Left ventricle myocardium inferior (tissue), 1 donor: ENCODE measurements at regions of chr2 and their contacts with region 1.

Region 1: GRCh38 chr2:214995926-214996670 is 142.3 kb downstream of the ABCA12 start:
- DNase-seq: no peak
- H3K4me3 ChIP-seq: no peak overlapping the region
- H3K27ac ChIP-seq: no peak overlapping the region
- H3K4me1 ChIP-seq: no peaks in the 10 kb centered on the region
- H3K27me3 ChIP-seq: no peaks in the 10 kb centered on the region
- CTCF ChIP-seq: no peak

Region 2: DNA sequence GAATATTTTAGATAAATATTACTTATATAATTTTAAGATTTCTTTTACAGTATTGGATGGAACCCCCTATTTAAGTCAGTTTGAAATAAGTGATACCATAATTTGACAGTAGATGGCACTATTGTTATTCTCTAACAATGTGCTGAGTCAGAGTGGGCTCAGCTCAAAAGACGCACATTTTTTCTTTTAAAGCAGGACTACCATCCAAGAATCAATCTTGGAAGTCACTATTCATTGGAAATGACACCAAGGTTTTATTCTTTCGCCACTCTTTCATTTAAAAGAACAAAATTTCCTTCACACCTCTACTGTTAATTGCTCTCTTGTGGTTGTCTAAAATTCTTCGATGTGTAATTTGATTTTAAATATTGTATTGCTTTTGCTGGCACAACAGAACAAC is 1744.5 kb before region 1 on chr2:
- intact Hi-C with region 1: loop called (anchors 10 kb)
- DNase-seq: no peak
- H3K4me3 ChIP-seq: no peak overlapping the region
- H3K27ac ChIP-seq: no peak overlapping the region
- H3K4me1 ChIP-seq: peaks cover 5% of the 10 kb centered on the region
- H3K27me3 ChIP-seq: peaks cover 3% of the 10 kb centered on the region
- CTCF ChIP-seq: peak; percentile 80

Region 3: GRCh38 chr2:215137807-215138206 is 141.7 kb after region 1 on chr2:
- intact Hi-C with region 1: no loop called
- DNase-seq: no peak
- H3K4me3 ChIP-seq: no peak overlapping the region
- H3K27ac ChIP-seq: no peak overlapping the region
- H3K4me1 ChIP-seq: no peaks in the 10 kb centered on the region
- H3K27me3 ChIP-seq: peaks cover 3% of the 10 kb centered on the region
- CTCF ChIP-seq: no peak